Activated CD4-positive, alpha-beta memory T cell treated with anti-CD3 and anti-CD28 coated beads for 36 hours (primary cell): ENCODE measurements at regions of chr14 and their contacts with region 1.

Region 1: DNA sequence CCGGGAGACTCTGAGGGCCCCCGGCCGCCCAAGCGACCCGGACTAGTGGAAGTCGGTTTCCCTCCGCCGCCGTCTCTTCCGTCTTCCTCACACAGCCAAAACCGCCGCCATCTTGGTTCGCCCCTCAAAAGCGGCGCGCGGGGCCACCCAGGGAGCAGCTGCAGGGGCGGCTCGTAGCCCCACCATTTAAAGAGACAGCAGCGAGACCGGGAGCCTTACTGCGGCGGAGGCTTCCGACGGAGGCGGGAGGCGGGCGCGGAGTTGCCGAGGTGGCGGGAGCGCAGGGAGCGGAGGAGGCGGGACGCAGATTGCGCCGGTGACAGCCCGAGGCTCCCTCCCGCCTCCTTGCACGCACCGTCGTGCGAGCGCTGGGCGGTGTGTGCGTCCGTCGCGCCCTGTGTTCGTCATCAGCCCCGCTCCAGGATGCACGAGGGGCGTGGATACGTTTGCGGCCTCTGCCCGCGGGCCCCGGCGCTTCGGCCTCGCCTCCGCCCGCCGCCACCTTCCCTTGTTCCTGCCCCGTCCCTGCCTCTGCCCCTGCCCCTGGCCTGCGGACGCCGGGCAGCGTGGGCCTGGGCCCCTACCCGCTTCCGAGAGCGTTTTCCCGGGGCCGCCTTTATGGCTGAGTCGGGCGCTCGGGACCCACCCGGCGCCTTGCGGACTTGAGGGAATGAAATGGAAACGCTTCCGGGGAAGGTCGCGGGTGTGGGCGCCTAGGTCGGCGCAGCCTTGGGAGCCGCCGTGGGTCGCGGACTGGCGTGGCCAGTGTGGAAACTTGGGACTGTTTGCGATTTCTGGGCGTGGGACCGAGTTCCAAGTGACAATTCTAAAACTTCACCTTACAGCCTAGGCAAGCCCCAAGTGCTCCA is at the start of gene PPP4R3A:
- DNase-seq: peak; percentile 96
- H3K4me3 Mint-ChIP-seq: peak within 1 kb of the TSS; percentile 94
- H3K27ac Mint-ChIP-seq: peak within 1 kb of the TSS; percentile 95
- H3K4me1 Mint-ChIP-seq: peaks cover 20% of the 10 kb centered on the region
- H3K27me3 Mint-ChIP-seq: no peaks in the 10 kb centered on the region
- total RNA-seq, gene PPP4R3A: 92.4 to 96.4 TPM

Region 2: GRCh38 chr14:91249841-91250616 is 260.4 kb before region 1 on chr14:
- CTCF ChIA-PET with region 1: no interaction called
- POLR2A ChIA-PET with region 1: no interaction called
- intact Hi-C with region 1: loop called (anchors 5 kb)
- DNase-seq: peak; percentile 67
- H3K4me3 Mint-ChIP-seq: peak overlapping the region; percentile 36
- H3K27ac Mint-ChIP-seq: peak overlapping the region; percentile 92
- H3K4me1 Mint-ChIP-seq: peaks cover 85% of the 10 kb centered on the region
- H3K27me3 Mint-ChIP-seq: no peaks in the 10 kb centered on the region

Region 3: GRCh38 chr14:91484186-91484585 is 26.2 kb before region 1 on chr14:
- CTCF ChIA-PET with region 1: no interaction called
- POLR2A ChIA-PET with region 1: no interaction called
- intact Hi-C with region 1: loop called (anchors 2 kb)
- DNase-seq: peak; percentile 34
- H3K4me3 Mint-ChIP-seq: no peak overlapping the region
- H3K27ac Mint-ChIP-seq: peak overlapping the region; percentile 19
- H3K4me1 Mint-ChIP-seq: peaks cover 42% of the 10 kb centered on the region
- H3K27me3 Mint-ChIP-seq: no peaks in the 10 kb centered on the region

Region 4: GRCh38 chr14:91836119-91836881 is 325.9 kb after region 1 on chr14:
- CTCF ChIA-PET with region 1: no interaction called
- POLR2A ChIA-PET with region 1: no interaction called
- intact Hi-C with region 1: loop called (anchors 10 kb)
- DNase-seq: peak; percentile 92
- H3K4me3 Mint-ChIP-seq: peak overlapping the region; percentile 87
- H3K27ac Mint-ChIP-seq: peak overlapping the region; percentile 79
- H3K4me1 Mint-ChIP-seq: peaks cover 66% of the 10 kb centered on the region
- H3K27me3 Mint-ChIP-seq: no peaks in the 10 kb centered on the region

Region 5: GRCh38 chr14:91996948-91997371 is 486.6 kb after region 1 on chr14:
- CTCF ChIA-PET with region 1: interaction called, 10 read pairs
- POLR2A ChIA-PET with region 1: no interaction called
- intact Hi-C with region 1: no loop called
- DNase-seq: no peak
- H3K4me3 Mint-ChIP-seq: no peak overlapping the region
- H3K27ac Mint-ChIP-seq: no peak overlapping the region
- H3K4me1 Mint-ChIP-seq: peaks cover 42% of the 10 kb centered on the region
- H3K27me3 Mint-ChIP-seq: no peaks in the 10 kb centered on the region

Region 6: DNA sequence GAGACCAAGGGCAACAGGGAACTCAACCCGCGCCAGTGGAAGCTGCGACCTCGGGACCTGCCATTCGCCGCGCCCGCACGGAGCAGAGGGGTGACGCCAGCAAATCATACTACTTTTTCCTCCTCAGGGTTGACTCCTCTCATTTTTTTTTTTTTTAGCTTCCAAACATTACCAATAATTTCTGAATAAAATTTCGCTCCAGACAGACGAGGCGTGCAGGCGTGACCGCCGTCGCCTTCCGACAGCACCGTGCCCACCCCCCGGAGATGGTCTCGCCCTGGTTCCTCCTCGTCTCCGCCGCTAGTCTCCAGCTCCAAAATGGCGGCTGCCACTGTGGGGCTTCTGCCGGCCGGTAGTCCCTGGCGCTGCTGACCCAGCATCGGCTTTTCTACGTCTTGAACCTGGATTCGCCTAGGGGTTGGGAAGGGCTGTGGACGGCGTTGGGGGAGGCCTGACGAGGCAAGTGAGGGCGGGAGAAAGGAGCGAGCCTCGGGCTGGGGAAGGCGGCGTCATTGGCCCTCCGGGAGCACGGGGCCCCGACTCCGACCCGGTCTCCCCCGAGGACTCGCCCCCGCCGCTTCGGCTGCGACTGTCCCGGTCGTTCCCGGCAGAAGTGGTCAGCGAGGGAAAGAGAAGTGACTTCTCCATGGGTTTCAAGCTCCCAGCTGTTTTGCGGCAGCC is 611.4 kb after region 1 on chr14 and contains the starts of genes CPSF2 and NDUFB1:
- CTCF ChIA-PET with region 1: no interaction called
- POLR2A ChIA-PET with region 1: interaction called, 3 read pairs
- intact Hi-C with region 1: loop called (anchors 1 kb)
- DNase-seq: peak; percentile 88
- H3K4me3 Mint-ChIP-seq: peak within 1 kb of the TSS; percentile 94
- H3K27ac Mint-ChIP-seq: peak within 1 kb of the TSS; percentile 97
- H3K4me1 Mint-ChIP-seq: peaks cover 27% of the 10 kb centered on the region
- H3K27me3 Mint-ChIP-seq: no peaks in the 10 kb centered on the region
- total RNA-seq, gene CPSF2: 100 to 105 TPM
- total RNA-seq, gene NDUFB1: 131 to 143 TPM